Lower leg skin (tissue), 4 donors: ENCODE measurements at regions of chr17 and their contacts with region 1.

Region 1: DNA sequence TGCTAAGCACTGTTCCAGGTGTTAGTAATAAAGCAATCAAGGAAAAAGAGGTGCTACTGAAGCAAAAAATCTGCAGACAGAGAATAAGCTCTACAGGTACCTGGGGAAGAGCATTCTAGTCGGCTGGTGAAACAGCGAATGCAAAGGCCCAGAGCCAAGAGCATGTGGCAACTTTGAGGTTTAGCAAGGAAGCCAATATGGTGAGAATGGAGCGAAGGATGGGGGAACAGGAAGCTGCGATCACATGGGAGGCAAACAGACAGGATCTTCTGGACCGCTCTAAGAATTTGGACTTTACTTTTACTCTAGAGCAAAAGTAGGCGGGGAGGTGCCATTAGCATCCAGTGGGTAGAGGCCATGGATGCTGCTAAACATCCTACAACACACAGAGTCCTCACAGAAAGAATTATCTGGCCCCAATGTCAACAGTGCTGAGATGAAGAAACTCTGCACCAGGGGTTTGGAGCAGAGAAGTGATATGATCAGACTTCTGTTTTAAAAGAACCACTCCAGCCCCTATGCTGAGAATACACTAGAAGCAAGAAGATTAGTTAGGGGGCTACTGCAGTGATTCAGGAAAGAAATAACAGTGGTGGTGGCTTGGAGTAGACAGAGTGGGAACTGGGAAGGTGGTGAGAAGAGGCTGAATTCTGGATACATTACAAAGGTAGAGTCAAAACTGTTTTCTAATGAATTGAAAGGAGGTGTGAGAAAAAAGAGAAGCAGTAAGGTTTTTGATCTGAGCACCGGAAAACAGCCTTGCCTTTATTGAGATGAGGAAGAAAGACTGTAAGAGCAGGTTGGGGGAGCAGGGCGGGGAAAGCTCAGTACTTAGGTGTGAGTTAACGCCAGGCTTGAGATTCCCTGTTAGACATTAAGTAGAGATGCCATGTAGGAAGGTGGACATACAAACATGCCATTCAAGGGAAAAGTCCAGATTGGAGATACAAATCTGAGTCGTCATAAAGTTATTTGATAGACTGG is 11.0 kb downstream of the EFTUD2 start:
- DNase-seq: no peak
- H3K4me3 ChIP-seq: no peak overlapping the region
- CTCF ChIP-seq: no peak
- POLR2A ChIP-seq: no peak

Region 2: GRCh38 chr17:43211480-43212402 is 1676.5 kb before region 1 on chr17 and contains the start of gene TMEM106A:
- intact Hi-C with region 1: loop called (anchors 10 kb)
- DNase-seq: peak; percentile 59 to 95
- H3K4me3 ChIP-seq: peak within 1 kb of the TSS; percentile 42
- CTCF ChIP-seq: no peak
- POLR2A ChIP-seq: no peak
- total RNA-seq, gene TMEM106A: 0.57 to 4.6 (median 1.4) TPM

Region 3: GRCh38 chr17:44844390-44844830 is 43.9 kb before region 1 on chr17:
- intact Hi-C with region 1: no loop called
- DNase-seq: no peak
- H3K4me3 ChIP-seq: no peak overlapping the region
- CTCF ChIP-seq: no peak
- POLR2A ChIP-seq: no peak